SK-N-SH (cell line): ENCODE measurements at regions of chr4 and their contacts with region 1.

Region 1: DNA sequence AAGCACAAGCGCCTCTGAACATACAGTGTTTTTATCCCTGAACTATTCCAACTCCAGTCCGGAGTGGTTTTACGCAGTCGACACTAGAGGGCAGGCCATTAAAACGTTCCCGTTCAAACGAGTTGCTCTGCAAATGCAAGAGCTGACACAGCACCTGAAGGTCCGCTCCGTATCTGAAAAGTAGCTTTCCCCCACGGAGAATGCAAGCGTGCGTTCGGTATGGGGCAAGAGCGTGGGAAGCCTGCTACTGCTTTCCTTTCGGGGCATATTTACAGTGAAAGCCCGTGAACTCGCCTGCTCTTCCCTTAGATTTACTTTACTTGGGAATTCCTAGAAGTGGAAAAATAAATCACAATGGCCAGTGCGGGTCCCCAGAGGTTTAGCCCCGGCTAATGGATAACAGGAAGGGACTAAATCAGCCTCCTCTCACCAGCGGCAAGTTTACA is 190.8 kb downstream of the TSPAN5 start:
- DNase-seq: peak; percentile 74
- H3K4me3 ChIP-seq: peak overlapping the region; percentile 46 to 54; a peak in 3 of 4 replicates
- H3K27ac ChIP-seq: peak overlapping the region in 1 of 2 experiments; percentile 71; a peak in 2 of 4 replicates
- H3K4me1 ChIP-seq: peaks cover 0 to 4% of the 10 kb centered on the region in 2 experiments; a peak in 2 of 4 replicates
- H3K27me3 ChIP-seq: no peaks in the 10 kb centered on the region
- CTCF ChIP-seq: peak; percentile 86
- EP300 ChIP-seq: no peak
- RAD21 ChIP-seq: peak; percentile 92

Region 2: GRCh38 chr4:98482847-98483806 is 15.5 kb after region 1 on chr4:
- CTCF ChIA-PET with region 1: interaction called, 33 read pairs
- POLR2A ChIA-PET with region 1: no interaction called
- DNase-seq: no peak
- H3K4me3 ChIP-seq: no peak overlapping the region
- H3K27ac ChIP-seq: peak overlapping the region in 1 of 2 experiments; percentile 51; a peak in 2 of 4 replicates
- H3K4me1 ChIP-seq: peaks cover 8 to 26% of the 10 kb centered on the region in 2 experiments
- H3K27me3 ChIP-seq: no peaks in the 10 kb centered on the region
- CTCF ChIP-seq: no peak
- EP300 ChIP-seq: no peak
- RAD21 ChIP-seq: no peak

Region 3: DNA sequence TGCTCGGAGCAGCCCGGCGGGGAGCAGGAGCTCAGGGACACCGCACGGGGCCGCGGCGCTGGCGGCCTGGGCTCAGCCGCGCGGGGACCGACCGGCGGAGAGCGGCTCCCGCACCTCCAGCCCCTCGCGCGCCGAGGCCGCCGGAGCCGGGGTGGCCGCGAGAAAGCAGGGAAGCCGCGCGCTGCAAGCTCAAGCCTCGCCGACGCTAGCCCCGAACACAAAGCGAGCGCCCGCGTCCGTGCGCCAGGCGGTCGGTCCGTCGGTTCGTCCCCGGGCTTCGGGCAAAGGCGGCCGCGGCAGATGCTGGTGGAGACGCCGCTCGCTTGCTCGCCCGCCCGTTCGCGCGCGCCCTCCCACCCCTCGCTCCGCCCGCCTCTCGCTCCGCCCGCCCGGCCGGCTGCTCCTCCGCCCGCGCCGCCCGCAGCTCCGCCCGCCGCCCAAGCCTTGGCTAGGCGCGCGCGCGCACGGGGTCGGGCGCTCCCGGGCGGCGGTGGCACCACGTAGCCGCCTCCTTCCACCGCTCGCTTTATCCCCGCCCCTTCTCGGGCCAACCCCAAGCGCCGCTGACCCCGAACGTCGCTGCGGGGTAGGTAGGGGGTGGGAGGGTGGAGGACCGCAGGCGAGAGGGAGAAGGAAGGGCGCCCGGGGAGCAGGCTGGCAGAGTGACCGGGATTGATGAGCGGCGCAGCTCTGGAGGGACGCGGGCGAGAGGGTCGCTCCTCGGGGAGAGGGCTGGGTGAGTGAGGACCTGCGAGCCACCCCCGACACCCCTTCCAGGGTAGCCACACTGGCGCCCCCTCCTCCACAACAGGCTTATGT is 190.8 kb after region 1 on chr4 and contains the start of gene TSPAN5:
- CTCF ChIA-PET with region 1: interaction called, 25 read pairs
- POLR2A ChIA-PET with region 1: no interaction called
- DNase-seq: peak; percentile 95
- H3K4me3 ChIP-seq: peak within 1 kb of the TSS; percentile 96
- H3K27ac ChIP-seq: peak within 1 kb of the TSS; percentile 87 to 99
- H3K4me1 ChIP-seq: peaks cover 19 to 27% of the 10 kb centered on the region in 2 experiments
- H3K27me3 ChIP-seq: no peaks in the 10 kb centered on the region
- CTCF ChIP-seq: no peak
- EP300 ChIP-seq: no peak
- RAD21 ChIP-seq: 0 out of 2 replicates have a peak, but pooled peaks have one; percentile 9
- polyA plus RNA-seq, gene TSPAN5: 38.6 and 54.5 TPM in 2 replicates

Region 4: DNA sequence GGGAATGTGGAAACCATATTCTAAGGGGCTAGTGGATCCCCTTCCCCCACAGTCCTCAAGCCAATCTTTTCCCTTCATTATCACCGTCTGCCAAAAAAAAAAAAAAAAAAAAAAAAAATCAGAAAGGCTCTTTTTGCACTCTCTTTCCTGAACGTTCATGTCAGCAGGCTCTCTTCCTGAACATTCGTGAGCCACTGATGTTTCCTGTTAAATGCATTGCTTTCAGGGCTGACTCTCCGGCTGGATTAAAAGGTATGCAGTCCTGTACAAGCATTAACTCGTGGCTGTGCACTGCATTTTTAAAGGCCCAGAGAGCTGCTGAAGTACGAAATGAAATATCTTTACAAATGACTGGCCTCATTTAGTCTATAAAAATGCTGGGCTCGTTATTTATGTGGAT is 224.8 kb after region 1 on chr4:
- CTCF ChIA-PET with region 1: interaction called, 13 read pairs
- POLR2A ChIA-PET with region 1: no interaction called
- DNase-seq: no peak
- H3K4me3 ChIP-seq: no peak overlapping the region
- H3K27ac ChIP-seq: no peak overlapping the region
- H3K4me1 ChIP-seq: peaks cover 4 to 7% of the 10 kb centered on the region in 2 experiments; a peak in 2 of 4 replicates
- H3K27me3 ChIP-seq: no peaks in the 10 kb centered on the region
- CTCF ChIP-seq: no peak
- EP300 ChIP-seq: no peak
- RAD21 ChIP-seq: no peak